ENCODE measurements at regions of chr3 and their contacts with region 1.

Region 1: GRCh38 chr3:71583566-71584449 is at the start of gene FOXP1:
- DNase-seq: peak; percentile 24
- H3K4me3 ChIP-seq: peak within 1 kb of the TSS; percentile 57 to 94 (median 78)
- H3K27ac ChIP-seq: peak within 1 kb of the TSS; percentile 97 to 100 (median 98)
- H3K4me1 ChIP-seq: peaks cover 0 to 50% (median 14%) of the 10 kb centered on the region in 3 donors
- H3K27me3 ChIP-seq: no peaks in the 10 kb centered on the region
- CTCF ChIP-seq: no peak
- POLR2A ChIP-seq: peak in 2 of 4 donors; percentile 53 to 77
- total RNA-seq, gene FOXP1: 49.1 to 124 (median 61.1) TPM

Region 2: GRCh38 chr3:71069797-71070196 is 514.0 kb before region 1 on chr3:
- intact Hi-C with region 1: loop called (anchors 10 kb)
- DNase-seq: no peak
- H3K4me3 ChIP-seq: no peak overlapping the region
- H3K27ac ChIP-seq: peak overlapping the region; percentile 43 to 99 (median 89)
- H3K4me1 ChIP-seq: peaks cover 32 to 91% (median 68%) of the 10 kb centered on the region in 3 donors
- H3K27me3 ChIP-seq: no peaks in the 10 kb centered on the region
- CTCF ChIP-seq: peak; percentile 45 to 77 (median 62)
- POLR2A ChIP-seq: no peak

Region 3: DNA sequence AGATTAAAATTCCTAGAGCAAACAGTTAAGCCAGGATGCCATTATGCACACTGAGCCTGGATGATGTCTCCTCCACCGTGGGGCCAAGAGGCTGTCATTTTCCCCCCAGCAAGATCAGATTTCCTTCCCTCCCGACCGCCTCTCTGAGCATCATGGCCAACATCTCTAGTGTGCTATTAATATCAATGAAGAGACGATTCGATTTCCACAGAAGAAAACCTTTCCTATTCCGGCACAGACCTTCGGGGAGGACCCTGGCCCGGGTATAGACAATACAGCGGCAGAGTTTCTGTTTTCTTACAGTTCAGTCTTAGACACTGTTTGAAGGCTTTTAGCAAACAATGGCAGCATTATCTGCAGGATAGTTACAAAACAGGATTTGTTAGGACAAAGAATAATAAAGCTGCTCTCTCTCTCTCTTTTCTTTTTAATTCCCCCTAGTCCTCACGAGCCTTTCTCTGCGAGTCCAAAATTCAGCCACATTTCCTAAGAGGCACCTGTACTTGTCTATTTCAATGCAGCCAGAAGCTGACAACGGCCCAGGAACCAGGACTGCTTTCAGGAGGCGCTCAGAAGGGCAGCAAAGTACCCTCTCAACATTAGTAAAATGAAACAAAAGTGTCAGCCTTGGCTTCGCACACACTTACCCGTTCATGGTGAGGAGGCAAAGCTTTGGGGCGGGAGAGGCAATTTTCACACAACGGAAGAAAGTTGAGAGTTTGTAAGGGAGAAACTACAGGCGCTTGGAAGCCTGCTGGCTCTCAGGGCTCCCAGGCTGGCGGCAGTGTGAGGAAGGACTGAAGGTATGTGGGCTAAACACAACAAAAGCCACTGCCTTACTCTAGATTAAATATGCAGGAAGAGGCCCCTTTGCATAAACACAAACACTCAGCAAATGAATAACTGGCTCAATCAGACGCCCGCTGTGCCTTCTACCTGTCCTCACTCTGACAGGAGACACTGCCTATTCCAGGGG is 278.3 kb before region 1 on chr3:
- intact Hi-C with region 1: no loop called
- DNase-seq: no peak
- H3K4me3 ChIP-seq: peak overlapping the region in 3 of 4 donors; percentile 31 to 53 (median 32)
- H3K27ac ChIP-seq: peak overlapping the region; percentile 50 to 69 (median 63)
- H3K4me1 ChIP-seq: peaks cover 5 to 42% (median 8%) of the 10 kb centered on the region in 3 donors
- H3K27me3 ChIP-seq: no peaks in the 10 kb centered on the region
- CTCF ChIP-seq: no peak
- POLR2A ChIP-seq: no peak

Region 4: DNA sequence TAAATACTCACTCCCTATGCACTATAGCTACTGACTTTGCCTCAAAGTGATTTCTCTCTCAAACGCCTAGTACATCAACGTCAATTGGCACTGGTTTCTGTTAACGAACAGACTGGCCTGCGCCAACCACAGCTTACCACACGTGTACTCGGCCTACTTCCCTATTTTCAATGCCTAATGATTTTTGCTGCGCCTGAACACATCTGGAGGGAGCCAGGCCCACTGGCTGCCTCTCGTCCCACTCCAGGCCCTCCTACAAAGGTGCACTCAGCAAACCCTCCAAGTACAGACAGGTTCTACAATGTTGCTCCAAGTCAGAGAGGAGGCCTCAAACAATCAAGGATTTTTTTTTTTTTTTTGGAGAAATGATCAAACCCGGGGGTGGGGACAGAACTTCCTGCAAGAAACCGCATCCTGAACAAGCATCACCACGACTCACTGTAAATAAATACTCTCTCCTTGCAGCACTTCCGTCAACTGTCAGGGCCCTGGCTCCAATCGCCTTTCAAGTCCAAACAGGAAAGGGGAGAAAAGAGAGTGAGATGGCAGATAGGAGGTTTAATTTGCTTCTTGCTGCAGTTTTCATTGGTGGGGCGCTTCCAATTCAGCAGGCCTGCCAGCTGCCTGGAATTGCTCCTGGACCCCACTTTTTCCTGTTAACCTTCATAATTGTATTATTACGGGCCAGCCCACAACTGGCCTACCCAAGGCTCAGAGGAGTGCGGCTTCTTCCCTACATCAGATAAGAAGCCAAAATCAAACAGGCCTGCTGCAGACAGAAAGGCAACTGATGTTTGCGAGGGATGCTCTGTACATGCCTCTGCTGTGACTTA is 139.6 kb before region 1 on chr3:
- intact Hi-C with region 1: loop called (anchors 5 kb)
- DNase-seq: peak; percentile 38
- H3K4me3 ChIP-seq: peak overlapping the region in 1 of 4 donors; percentile 1
- H3K27ac ChIP-seq: peak overlapping the region; percentile 84 to 90 (median 89)
- H3K4me1 ChIP-seq: peaks cover 59 to 100% (median 81%) of the 10 kb centered on the region in 3 donors
- H3K27me3 ChIP-seq: no peaks in the 10 kb centered on the region
- CTCF ChIP-seq: no peak
- POLR2A ChIP-seq: no peak